CD8-positive, alpha-beta T cell (primary cell): ENCODE measurements at regions of chr19 and their contacts with region 1.

Region 1: GRCh38 chr19:15418588-15419412 is at the start of gene AKAP8L:
- DNase-seq: peak; percentile 97 to 100 (median 98)
- ATAC-seq: peak; percentile 89
- H3K4me3 ChIP-seq: peak within 1 kb of the TSS; percentile 86 to 94
- H3K4me3 Mint-ChIP-seq: peak within 1 kb of the TSS; percentile 97
- H3K27ac ChIP-seq: peak within 1 kb of the TSS; percentile 77 to 93
- H3K27ac Mint-ChIP-seq: peak within 1 kb of the TSS; percentile 98
- H3K4me1 ChIP-seq: peaks cover 29% of the 10 kb centered on the region
- H3K4me1 Mint-ChIP-seq: peaks cover 46% of the 10 kb centered on the region
- H3K27me3 ChIP-seq: no peaks in the 10 kb centered on the region
- H3K27me3 Mint-ChIP-seq: no peaks in the 10 kb centered on the region
- CTCF ChIP-seq: peak; percentile 72
- total RNA-seq, gene AKAP8L: 174 to 199 TPM

Region 2: DNA sequence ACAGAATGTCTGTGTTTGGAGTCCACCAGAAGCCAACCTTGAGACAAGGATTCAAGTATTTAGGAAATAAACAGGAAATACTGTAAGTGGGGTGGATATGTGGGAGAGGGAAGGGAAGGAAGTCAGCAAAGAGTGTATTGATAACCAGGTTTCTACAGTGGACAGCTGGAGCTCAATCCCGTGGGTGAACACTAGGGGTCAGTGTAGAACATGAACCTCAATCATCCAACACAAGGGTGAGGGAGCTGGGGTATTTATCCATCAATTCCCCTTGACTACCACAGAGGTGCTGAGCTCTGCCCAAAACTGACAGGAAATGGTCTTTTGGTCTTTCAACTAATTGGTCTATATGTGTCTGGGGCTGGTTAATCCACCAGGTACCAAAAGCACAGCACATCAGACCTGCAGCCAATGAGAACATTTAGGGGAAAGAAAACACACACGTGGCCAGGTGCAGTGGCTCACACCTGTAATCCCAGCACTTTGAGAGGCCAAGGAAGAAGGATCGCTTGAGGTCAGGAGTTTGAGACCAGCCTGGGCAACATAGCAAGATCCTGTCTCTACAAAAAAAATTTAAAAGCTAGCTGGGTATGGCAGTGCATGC is 317.2 kb before region 1 on chr19:
- CTCF ChIA-PET with region 1: interaction called, 4 read pairs
- POLR2A ChIA-PET with region 1: no interaction called
- intact Hi-C with region 1: loop called in 1 of 2 experiments (anchors 5 kb)
- DNase-seq: peak in 7 of 9 experiments; percentile 20 to 71 (median 58)
- ATAC-seq: peak; percentile 59
- H3K4me3 ChIP-seq: no peak overlapping the region
- H3K4me3 Mint-ChIP-seq: no peak overlapping the region
- H3K27ac ChIP-seq: no peak overlapping the region
- H3K27ac Mint-ChIP-seq: no peak overlapping the region
- H3K4me1 ChIP-seq: no peaks in the 10 kb centered on the region
- H3K4me1 Mint-ChIP-seq: peaks cover 4% of the 10 kb centered on the region
- H3K27me3 ChIP-seq: no peaks in the 10 kb centered on the region
- H3K27me3 Mint-ChIP-seq: peaks cover 7% of the 10 kb centered on the region
- CTCF ChIP-seq: peak; percentile 56

Region 3: GRCh38 chr19:15264061-15264932 is 154.5 kb before region 1 on chr19:
- CTCF ChIA-PET with region 1: interaction called, 9 read pairs
- POLR2A ChIA-PET with region 1: no interaction called
- intact Hi-C with region 1: loop called in 1 of 2 experiments (anchors 2 kb)
- DNase-seq: peak; percentile 46 to 82 (median 72)
- ATAC-seq: peak; percentile 71
- H3K4me3 ChIP-seq: no peak overlapping the region
- H3K4me3 Mint-ChIP-seq: no peak overlapping the region
- H3K27ac ChIP-seq: no peak overlapping the region
- H3K27ac Mint-ChIP-seq: no peak overlapping the region
- H3K4me1 ChIP-seq: no peaks in the 10 kb centered on the region
- H3K4me1 Mint-ChIP-seq: peaks cover 3% of the 10 kb centered on the region
- H3K27me3 ChIP-seq: no peaks in the 10 kb centered on the region
- H3K27me3 Mint-ChIP-seq: no peaks in the 10 kb centered on the region
- CTCF ChIP-seq: peak; percentile 70

Region 4: GRCh38 chr19:15379083-15379995 is 39.5 kb before region 1 on chr19 and contains the start of gene AKAP8:
- CTCF ChIA-PET with region 1: interaction called, 24 read pairs
- POLR2A ChIA-PET with region 1: interaction called, 88 read pairs
- intact Hi-C with region 1: loop called (anchors 1 kb)
- DNase-seq: peak; percentile 95 to 100 (median 98)
- ATAC-seq: peak; percentile 88
- H3K4me3 ChIP-seq: peak within 1 kb of the TSS; percentile 92 to 96
- H3K4me3 Mint-ChIP-seq: peak within 1 kb of the TSS; percentile 94
- H3K27ac ChIP-seq: peak within 1 kb of the TSS; percentile 98 to 99
- H3K27ac Mint-ChIP-seq: peak within 1 kb of the TSS; percentile 98
- H3K4me1 ChIP-seq: peaks cover 36% of the 10 kb centered on the region
- H3K4me1 Mint-ChIP-seq: peaks cover 40% of the 10 kb centered on the region
- H3K27me3 ChIP-seq: no peaks in the 10 kb centered on the region
- H3K27me3 Mint-ChIP-seq: no peaks in the 10 kb centered on the region
- CTCF ChIP-seq: no peak
- total RNA-seq, gene AKAP8: 97.4 to 109 TPM

Region 5: DNA sequence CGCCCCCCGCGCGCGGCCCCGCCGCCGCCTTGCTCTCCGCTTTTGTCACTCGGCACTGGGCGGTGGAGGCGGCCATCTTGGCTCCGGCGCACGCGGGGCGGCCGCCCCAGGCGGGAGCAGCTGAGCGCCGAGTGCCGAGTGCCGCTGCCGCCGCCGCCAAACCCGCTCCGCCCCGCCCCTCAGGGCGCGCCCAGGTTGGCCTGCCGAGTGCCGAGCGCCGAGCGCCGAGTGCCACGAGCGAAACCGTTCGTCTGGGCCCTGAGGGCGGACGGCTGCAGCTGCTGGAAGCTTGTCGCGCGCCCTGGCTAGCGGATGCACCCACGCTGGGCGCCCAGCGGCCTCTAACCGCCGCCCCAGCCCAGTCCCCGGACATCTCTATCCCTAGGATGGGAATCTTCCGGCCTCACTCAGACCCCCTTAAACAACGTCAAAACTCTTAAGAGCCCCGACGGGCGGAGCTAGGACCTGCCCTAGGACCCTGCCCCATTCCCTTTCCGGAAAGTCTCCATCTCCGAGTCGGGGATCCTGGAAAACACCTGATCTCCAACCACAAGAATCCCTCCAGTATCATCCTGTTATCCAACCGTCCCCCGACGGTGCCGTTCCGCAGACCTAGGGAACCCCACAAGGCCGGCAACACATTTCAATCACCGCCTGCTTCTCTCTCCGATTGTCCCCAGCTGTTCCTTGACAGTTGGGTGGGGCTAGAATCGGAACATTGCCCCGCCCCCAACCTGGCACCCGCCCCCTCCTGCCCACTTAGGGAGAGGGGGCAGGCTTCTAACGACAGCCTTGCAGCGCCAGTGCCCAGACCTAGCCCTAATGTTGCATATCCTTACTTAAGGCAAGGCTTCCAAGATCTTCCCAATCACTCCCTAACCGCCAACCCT is 14.1 kb after region 1 on chr19:
- CTCF ChIA-PET with region 1: interaction called, 24 read pairs
- POLR2A ChIA-PET with region 1: interaction called, 43 read pairs
- intact Hi-C with region 1: loop called (anchors 1 kb)
- DNase-seq: peak; percentile 85 to 96 (median 91)
- ATAC-seq: peak; percentile 95
- H3K4me3 ChIP-seq: peak overlapping the region; percentile 88 to 100
- H3K4me3 Mint-ChIP-seq: peak overlapping the region; percentile 89
- H3K27ac ChIP-seq: peak overlapping the region; percentile 76 to 79
- H3K27ac Mint-ChIP-seq: peak overlapping the region; percentile 87
- H3K4me1 ChIP-seq: peaks cover 31% of the 10 kb centered on the region
- H3K4me1 Mint-ChIP-seq: peaks cover 26% of the 10 kb centered on the region
- H3K27me3 ChIP-seq: no peaks in the 10 kb centered on the region
- H3K27me3 Mint-ChIP-seq: no peaks in the 10 kb centered on the region
- CTCF ChIP-seq: no peak

Region 6: DNA sequence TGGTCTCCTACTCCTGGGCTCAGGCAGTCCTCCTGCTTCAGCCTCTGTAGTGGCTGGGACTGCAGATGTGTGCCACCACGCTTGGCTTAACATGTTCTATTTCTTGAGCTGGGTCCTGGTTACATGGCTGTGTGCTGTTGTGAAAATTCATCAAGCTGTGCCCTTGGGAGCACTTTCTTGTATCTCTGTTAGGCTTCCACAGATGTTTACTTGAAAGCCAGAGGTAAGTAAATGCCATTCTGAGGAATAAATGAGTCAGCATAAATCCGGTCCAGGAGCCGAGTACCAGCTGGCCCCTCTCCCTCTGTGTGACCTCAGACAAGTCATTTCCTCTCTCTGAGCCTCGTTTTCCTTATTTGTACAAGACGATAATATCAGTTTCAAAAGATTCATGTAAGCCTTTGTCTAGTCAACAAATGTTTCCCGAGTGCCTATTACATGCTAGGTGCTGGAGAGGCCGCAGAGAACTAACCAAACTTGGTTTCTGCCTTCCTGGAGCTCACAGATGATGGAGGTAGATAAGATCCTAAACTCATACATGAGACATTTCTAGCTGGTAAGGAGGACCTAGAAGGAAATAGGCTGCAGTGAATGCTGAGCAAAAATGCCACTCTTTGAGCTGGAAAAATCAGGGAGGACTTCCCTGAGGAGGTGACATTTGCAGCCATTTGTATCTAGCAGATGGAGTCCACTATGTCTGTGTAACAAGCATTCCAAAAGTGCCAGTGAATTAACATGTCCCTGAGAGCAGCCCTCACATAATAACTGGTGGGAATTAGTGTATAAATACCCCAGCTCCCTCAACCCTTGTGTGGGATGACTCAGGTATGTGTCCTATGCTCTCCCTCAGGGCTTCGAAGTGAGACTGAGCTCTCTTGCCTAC is 48.3 kb after region 1 on chr19:
- CTCF ChIA-PET with region 1: interaction called, 14 read pairs
- POLR2A ChIA-PET with region 1: interaction called, 30 read pairs
- intact Hi-C with region 1: loop called (anchors 1 kb)
- DNase-seq: peak in 8 of 9 experiments; percentile 32 to 75 (median 59)
- ATAC-seq: peak; percentile 25
- H3K4me3 ChIP-seq: no peak overlapping the region
- H3K4me3 Mint-ChIP-seq: peak overlapping the region; percentile 50
- H3K27ac ChIP-seq: peak overlapping the region in 1 of 2 experiments; percentile 68
- H3K27ac Mint-ChIP-seq: peak overlapping the region; percentile 89
- H3K4me1 ChIP-seq: peaks cover 58% of the 10 kb centered on the region
- H3K4me1 Mint-ChIP-seq: peaks cover 61% of the 10 kb centered on the region
- H3K27me3 ChIP-seq: no peaks in the 10 kb centered on the region
- H3K27me3 Mint-ChIP-seq: no peaks in the 10 kb centered on the region
- CTCF ChIP-seq: no peak

Region 7: GRCh38 chr19:15836595-15837337 is 418.0 kb after region 1 on chr19:
- CTCF ChIA-PET with region 1: no interaction called
- POLR2A ChIA-PET with region 1: no interaction called
- intact Hi-C with region 1: loop called in 1 of 2 experiments (anchors 2 kb)
- DNase-seq: peak; percentile 90 to 99 (median 95)
- ATAC-seq: peak; percentile 87
- H3K4me3 ChIP-seq: peak overlapping the region; percentile 64 to 78
- H3K4me3 Mint-ChIP-seq: peak overlapping the region; percentile 91
- H3K27ac ChIP-seq: peak overlapping the region; percentile 96 to 97
- H3K27ac Mint-ChIP-seq: peak overlapping the region; percentile 98
- H3K4me1 ChIP-seq: peaks cover 22% of the 10 kb centered on the region
- H3K4me1 Mint-ChIP-seq: peaks cover 31% of the 10 kb centered on the region
- H3K27me3 ChIP-seq: no peaks in the 10 kb centered on the region
- H3K27me3 Mint-ChIP-seq: no peaks in the 10 kb centered on the region
- CTCF ChIP-seq: no peak